Heart left ventricle (tissue), 16 donors: ENCODE measurements at regions of chr2 and their contacts with region 1.

Region 1: DNA sequence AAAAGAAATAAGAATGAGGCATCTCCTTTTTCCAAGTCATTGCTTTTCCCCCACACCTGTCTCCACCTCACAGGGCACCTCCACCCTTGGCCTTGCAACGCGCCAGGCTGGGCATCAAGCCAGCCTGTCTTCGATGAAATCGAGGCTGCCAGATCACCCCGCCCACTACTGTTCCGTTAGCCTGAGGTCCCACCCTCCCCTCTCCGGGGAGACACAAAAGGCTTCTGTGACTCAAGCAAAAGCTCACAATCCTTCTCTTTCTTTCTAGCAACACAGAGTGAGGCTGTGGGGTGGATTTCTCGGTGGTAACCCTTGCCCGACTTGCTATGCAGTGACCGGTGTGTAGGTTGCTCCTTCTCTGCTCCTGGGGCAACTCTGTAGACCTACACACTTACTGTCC is 9.9 kb downstream of the TNP1 start:
- DNase-seq: peak; percentile 66 to 82 (median 81)
- ATAC-seq: peak; percentile 57 to 93 (median 90)
- H3K4me3 ChIP-seq: no peak overlapping the region
- H3K27ac ChIP-seq: peak overlapping the region in 3 of 12 donors; percentile 2 to 46 (median 4)
- H3K4me1 ChIP-seq: peaks cover 0 to 33% (median 13%) of the 10 kb centered on the region in 12 donors
- H3K27me3 ChIP-seq: no peaks in the 10 kb centered on the region
- CTCF ChIP-seq: no peak
- POLR2A ChIP-seq: no peak

Region 2: DNA sequence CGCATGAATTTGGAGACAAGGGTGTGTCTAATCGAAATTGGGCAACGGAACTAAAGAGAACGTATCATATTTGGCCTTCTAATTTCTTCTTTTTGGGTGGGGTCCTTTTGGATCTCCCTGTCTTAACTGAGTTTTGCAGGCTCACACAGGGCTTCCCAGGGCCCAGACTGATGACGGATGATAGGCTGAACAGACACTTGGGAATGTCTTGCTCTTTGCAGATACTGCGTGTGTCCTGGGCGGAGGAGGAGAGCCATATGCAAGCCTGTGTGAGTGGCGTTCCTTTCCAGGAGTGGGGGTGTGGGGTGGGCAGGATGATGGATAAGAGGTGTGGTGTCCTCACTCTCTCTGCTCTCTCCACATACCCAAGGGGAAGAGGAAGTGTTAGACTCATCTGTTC is 30.2 kb before region 1 on chr2:
- intact Hi-C with region 1: no loop called
- DNase-seq: no peak
- ATAC-seq: no peak
- H3K4me3 ChIP-seq: no peak overlapping the region
- H3K27ac ChIP-seq: no peak overlapping the region
- H3K4me1 ChIP-seq: peaks cover 0 to 4% (median 0%) of the 10 kb centered on the region in 12 donors
- H3K27me3 ChIP-seq: no peaks in the 10 kb centered on the region
- CTCF ChIP-seq: no peak
- POLR2A ChIP-seq: no peak

Region 3: DNA sequence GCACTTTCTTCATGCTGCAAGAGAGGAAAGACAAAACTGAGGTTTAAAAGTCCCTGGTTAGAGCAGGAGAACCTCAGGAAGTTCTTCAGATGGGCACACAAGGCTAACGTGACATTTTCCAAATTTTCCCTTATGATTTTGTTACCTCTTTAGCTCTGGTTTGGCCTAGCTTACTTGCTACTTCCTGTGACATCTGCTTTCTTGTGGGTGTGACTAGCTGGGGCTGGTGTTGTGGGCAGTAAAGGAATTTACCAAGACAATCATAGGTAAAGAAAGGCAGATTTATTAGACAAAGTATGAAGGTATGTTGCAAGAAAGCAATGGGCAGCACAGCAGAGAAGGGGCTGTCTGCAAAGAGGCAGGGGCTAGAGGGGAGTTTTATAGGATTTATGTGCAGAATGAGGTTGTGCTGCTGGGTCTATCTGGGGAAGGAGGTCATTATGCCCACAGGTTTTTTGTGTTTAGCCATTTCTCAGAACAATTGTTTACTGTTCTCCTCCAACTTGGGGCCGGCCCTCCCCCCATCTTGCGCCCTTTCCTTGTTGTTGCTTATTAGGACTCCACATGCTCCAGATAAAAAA is 16.6 kb after region 1 on chr2:
- intact Hi-C with region 1: no loop called
- DNase-seq: no peak
- ATAC-seq: no peak
- H3K4me3 ChIP-seq: no peak overlapping the region
- H3K27ac ChIP-seq: no peak overlapping the region
- H3K4me1 ChIP-seq: peaks cover 0 to 7% (median 0%) of the 10 kb centered on the region in 12 donors
- H3K27me3 ChIP-seq: no peaks in the 10 kb centered on the region
- CTCF ChIP-seq: no peak
- POLR2A ChIP-seq: no peak

Region 4: DNA sequence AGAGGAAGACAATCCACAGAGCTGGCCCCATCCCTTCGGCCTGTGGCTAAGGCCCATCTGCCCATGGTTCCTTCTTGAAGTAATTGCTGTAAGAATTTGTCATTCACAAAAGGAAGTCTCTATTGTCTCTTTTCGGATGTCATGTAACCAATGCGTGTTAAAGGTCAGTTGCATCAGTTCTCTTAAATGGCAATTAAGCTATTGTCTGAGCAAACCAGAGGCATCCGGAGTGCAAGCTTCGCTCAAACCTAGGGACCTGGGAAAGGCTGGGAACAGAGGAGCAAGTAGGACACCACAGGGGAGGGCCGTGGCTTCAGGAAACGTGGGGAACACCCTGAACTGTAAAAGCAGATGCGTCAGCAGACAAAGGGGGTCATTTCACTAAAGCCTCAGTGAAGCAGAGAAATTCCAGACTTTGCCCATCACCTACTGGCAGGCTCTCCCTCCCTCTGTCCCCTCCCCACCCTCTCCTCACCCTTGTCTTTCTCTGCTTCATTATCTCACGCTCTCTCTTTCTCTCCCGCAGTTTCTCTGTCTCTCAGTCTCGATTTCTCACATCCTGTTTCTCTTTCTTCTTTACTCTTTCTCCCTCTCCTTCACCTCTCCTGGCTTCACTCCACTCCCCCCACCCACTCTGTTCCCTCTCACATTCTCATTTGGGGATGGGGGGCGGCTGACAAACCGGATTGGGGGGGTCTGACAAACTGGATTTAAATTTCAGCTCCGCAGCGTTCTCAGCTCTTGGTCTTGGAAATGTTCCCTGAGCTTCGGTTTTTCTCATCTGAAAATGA is 214.4 kb after region 1 on chr2:
- intact Hi-C with region 1: loop called in 1 of 10 experiments (anchors 10 kb)
- DNase-seq: peak in 3 of 5 donors; percentile 47 to 75 (median 52)
- ATAC-seq: peak; percentile 51 to 96 (median 82)
- H3K4me3 ChIP-seq: peak overlapping the region in 4 of 12 donors; percentile 10 to 38 (median 16)
- H3K27ac ChIP-seq: peak overlapping the region in 10 of 12 donors; percentile 15 to 69 (median 47)
- H3K4me1 ChIP-seq: peaks cover 0 to 25% (median 8%) of the 10 kb centered on the region in 12 donors
- H3K27me3 ChIP-seq: no peaks in the 10 kb centered on the region
- CTCF ChIP-seq: no peak
- POLR2A ChIP-seq: no peak